Endothelial cell of umbilical vein (primary cell): ENCODE measurements at regions of chr14 and their contacts with region 1.

Region 1: DNA sequence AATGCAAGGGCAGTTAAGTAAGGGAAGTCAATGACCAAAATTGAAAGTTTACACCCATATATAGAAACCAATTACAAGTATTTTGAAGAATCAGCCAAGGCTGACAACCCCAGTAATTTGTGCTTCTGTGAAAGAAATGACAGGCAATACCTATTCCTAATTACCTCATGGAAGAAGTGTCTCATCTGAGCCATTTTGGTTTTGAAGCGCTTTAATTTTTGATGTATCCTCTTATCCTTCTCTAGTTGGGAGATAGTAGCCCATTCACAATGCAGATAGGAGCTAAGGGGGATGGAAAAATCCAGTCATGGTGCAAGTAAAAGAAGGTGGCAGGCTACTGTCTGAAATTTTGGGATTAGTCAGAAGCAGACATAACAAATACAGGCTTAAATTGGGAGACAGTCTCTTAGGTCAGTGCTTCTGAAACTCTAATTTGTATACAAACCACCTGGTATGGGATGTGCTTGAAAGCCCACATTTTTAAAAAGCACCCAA is 30.4 kb upstream of the SUPT16H start:
- DNase-seq: no peak
- H3K4me3 ChIP-seq: no peak overlapping the region
- H3K27ac ChIP-seq: no peak overlapping the region
- H3K4me1 ChIP-seq: no peaks in the 10 kb centered on the region
- H3K27me3 ChIP-seq: no peaks in the 10 kb centered on the region
- CTCF ChIP-seq: no peak
- POLR2A ChIP-seq: no peak

Region 2: DNA sequence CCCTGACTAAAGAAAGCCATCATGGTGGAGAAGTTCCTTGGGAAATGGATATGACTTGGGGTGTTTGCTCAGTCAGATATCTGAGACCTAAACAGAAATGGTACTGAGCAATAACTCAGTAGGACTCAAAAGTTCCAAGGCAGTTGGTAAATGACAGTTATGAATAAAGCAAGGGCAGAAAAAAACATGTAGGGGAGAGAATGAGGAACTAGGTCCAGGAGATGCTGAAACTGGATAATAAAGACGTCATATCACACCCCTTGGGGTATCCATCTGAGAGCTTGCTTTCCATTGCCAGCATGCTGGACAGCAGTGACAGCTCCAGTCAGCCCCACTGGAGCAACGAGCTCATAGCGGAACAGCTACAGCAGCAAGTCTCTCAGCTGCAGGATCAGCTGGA is 96.8 kb before region 1 on chr14:
- CTCF ChIA-PET with region 1: no interaction called
- POLR2A ChIA-PET with region 1: no interaction called
- dilution Hi-C with region 1: no loop called
- intact Hi-C with region 1: no loop called
- DNase-seq: no peak
- H3K4me3 ChIP-seq: no peak overlapping the region
- H3K27ac ChIP-seq: no peak overlapping the region
- H3K4me1 ChIP-seq: no peaks in the 10 kb centered on the region
- H3K27me3 ChIP-seq: peaks cover 3 to 4% of the 10 kb centered on the region in 2 experiments
- CTCF ChIP-seq: no peak
- POLR2A ChIP-seq: no peak

Region 3: DNA sequence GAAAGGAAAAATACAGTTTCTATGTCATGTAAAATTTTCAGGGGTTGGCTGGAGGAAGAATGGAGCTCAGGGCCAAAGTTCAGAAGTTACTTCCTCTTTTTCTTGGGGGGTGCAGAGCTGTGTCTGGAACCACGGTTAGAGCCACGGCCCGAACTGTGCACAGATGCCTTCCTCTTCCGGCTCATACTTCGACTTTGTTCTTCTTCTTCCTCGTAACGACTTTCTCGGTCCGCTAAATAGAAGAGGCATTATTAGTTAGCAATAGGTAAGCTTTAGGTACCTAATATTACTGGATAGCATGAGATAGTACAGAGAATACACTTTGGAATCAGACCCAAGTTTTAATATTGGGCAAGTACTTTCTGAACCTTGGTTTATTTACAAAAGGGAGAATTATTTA is 61.6 kb before region 1 on chr14:
- CTCF ChIA-PET with region 1: no interaction called
- POLR2A ChIA-PET with region 1: no interaction called
- dilution Hi-C with region 1: no loop called
- intact Hi-C with region 1: loop called (anchors 10 kb)
- DNase-seq: no peak
- H3K4me3 ChIP-seq: no peak overlapping the region
- H3K27ac ChIP-seq: no peak overlapping the region
- H3K4me1 ChIP-seq: no peaks in the 10 kb centered on the region
- H3K27me3 ChIP-seq: no peaks in the 10 kb centered on the region
- CTCF ChIP-seq: no peak
- POLR2A ChIP-seq: no peak